ENCODE measurements at regions of chr17 and their contacts with region 1.

Region 1: DNA sequence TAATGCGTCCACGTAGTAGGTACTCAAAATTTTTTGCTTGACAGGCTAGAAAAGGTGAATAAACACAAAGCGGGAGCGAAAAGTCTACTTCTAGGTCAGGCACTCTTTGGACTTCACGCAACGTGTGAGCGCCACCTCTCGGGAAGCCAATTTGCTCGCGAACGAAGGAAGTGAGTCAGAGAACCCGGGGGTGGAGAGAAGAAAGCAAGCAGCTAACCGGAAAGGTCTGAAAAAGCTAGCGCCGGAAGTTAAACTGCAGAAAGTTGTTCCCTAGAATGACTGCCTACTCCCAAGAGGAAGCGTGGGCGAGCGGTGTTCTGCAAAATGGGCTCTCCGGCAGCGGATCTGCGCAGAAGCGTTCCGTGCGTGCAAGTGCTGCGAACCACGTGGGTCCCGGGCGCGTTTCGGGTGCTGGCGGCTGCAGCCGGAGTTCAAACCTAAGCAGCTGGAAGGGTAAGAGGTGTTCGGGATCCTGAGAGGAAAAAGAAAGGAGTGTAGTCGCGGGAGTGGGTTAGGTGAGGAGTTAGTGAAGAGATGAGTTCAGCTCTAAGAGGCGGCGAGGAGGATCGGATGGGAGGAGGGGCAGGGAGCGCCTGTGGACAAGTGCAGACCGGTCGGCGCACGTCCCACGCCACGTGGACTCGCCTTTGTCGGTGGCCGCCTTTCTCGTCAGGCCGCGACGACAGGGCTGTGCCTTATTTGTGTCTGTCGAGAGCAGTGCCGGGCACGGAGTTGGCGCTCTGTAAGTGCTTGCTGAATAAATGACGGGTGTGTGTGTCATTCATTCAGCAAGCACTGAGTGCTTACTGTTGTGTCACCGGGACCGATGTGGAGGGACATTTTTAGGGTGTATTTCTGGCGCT is at the start of gene NME1:
- DNase-seq: peak; percentile 94 to 96
- ATAC-seq: peak; percentile 93
- total RNA-seq, gene NME1: 25.9 to 43.9 TPM

Region 2: GRCh38 chr17:50853015-50853615 is 300.3 kb before region 1 on chr17:
- intact Hi-C with region 1: loop called in 1 of 2 experiments (anchors 10 kb)
- DNase-seq: peak in 1 of 2 donors; percentile 19
- ATAC-seq: peak; percentile 24

Region 3: DNA sequence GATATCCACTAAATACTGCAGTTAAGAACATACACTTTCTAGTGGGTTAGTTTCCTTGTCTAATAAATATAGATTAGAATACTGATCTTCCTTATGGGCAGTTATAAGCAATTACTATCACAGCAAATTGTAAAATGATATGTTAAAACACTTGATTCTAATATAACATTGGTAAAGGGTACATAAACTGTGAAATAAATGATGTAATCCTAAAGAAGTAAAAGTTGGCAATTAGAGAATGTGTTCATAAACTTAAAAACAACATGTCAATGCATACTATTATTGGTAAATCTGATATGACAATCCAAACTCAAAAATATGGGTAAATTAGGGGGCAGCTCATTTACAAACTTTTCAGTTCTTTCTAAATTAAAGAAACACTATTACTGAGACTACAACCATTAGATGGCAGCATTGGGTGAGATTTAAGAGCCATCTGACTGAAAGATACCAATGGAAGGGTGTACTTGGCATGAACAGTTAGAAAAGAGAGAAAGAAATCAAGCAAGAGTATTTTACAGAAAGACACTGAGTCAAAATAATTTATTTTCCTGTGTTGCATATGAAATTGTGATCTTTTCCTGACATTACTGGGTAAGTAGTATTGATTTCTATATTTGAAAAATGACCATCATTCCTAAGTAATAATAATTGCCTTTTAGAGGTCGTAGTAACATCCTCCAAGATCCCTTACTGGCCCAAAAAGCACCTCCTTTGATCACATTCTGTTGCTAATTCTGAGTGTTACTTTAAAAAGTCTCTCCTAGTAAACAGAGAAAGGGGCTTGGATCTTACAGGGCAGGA is 152.4 kb before region 1 on chr17:
- intact Hi-C with region 1: loop called in 1 of 2 experiments (anchors 2 kb)
- DNase-seq: no peak
- ATAC-seq: peak; percentile 79

Region 4: DNA sequence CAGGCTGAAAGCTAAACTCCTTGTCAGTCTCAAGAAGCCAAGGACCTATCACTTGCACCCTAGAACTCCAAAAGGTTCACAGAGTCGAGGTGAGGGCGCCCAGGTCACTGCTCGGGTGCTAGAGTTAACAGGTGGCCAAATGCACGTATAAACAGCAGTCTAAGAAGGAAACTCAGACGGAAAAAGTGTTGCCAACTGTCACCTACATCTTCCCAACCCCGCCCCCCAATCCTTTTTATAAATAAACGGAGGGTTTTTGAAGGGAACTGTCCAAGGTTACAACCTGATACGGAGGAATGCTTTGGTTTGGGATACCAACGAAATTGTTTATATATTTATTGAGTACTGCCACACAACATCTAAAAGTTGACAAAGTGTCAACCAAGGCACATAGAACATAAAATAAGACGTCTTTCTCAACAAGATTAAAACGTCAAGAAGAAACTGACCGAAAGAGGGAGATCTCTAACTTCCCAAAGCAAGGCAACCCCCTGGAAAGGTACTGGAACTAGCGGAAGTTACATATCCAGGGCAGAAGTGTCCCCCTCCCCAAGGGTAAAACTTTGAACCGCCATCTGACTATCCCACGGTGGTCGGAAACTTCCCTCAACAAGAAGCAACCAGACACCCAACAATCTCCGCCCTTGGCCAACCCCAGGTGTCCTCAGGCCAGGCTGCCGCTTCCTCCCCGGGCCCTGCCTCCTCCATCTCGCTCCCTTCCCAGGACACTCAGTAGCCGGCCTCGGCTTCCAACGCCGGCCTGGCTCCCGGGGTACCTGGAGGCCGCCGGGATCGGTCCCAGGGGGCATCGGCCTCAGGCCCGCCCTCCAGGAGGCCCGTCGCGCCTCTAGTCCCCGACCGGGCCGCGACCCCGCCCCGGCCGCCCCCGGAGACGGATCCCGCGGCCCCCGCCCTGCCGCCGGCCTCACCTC is 33.8 kb before region 1 on chr17:
- intact Hi-C with region 1: loop called in 1 of 2 experiments (anchors 5 kb)
- DNase-seq: peak; percentile 49 to 63
- ATAC-seq: peak; percentile 19

Region 5: GRCh38 chr17:51516924-51517323 is 363.5 kb after region 1 on chr17:
- intact Hi-C with region 1: no loop called
- DNase-seq: no peak
- ATAC-seq: no peak

Region 6: DNA sequence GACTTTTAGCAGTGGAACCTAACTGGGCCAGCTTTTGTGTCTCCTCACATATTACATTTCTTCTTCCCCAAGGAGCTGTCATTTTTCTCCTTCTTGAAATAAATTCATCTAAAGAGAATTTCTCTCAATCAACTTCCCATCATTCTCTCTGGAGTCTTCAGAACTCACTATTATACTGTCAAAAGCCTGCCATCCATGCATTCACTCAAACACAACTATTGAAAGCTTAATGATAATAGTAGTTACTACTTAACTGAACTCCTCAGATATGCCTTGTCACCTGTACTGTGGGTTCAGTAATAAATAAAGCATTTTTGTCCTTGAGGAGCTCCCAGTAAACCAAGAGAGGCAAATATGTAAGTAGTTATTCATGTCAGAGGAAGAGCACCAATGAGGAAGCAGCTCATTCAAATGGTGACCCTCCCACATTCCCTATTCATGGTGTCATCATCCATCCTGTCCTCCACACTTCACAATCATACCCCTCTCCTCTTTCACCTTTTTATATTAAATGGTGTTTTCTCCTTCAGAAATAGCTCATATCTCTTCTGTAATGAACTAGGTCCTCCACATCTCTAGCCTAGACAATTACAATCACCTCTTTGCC is 842.5 kb after region 1 on chr17:
- intact Hi-C with region 1: no loop called
- DNase-seq: no peak
- ATAC-seq: no peak